SK-N-SH (cell line): ENCODE measurements at regions of chr12 and their contacts with region 1.

Region 1: GRCh38 chr12:12813120-12814101 is at the start of gene DDX47:
- DNase-seq: peak; percentile 92
- H3K4me3 ChIP-seq: peak within 1 kb of the TSS; percentile 96 to 99
- H3K27ac ChIP-seq: peak within 1 kb of the TSS; percentile 75 to 82
- H3K4me1 ChIP-seq: peaks cover 8 to 10% of the 10 kb centered on the region in 2 experiments
- H3K27me3 ChIP-seq: no peaks in the 10 kb centered on the region
- CTCF ChIP-seq: peak; percentile 82
- EP300 ChIP-seq: no peak
- RAD21 ChIP-seq: peak; percentile 61
- polyA plus RNA-seq, gene DDX47: 68.4 and 90.9 TPM in 2 replicates

Region 2: GRCh38 chr12:12786716-12787601 is 26.5 kb before region 1 on chr12:
- CTCF ChIA-PET with region 1: interaction called, 23 read pairs
- POLR2A ChIA-PET with region 1: interaction called, 8 read pairs
- DNase-seq: peak; percentile 97
- H3K4me3 ChIP-seq: peak overlapping the region; percentile 51 to 54
- H3K27ac ChIP-seq: peak overlapping the region; percentile 49 to 92; a peak in 3 of 4 replicates
- H3K4me1 ChIP-seq: peaks cover 5 to 30% of the 10 kb centered on the region in 2 experiments; a peak in 3 of 4 replicates
- H3K27me3 ChIP-seq: no peaks in the 10 kb centered on the region
- CTCF ChIP-seq: 0 out of 2 replicates have a peak, but pooled peaks have one; percentile 5
- EP300 ChIP-seq: peak in 1 of 2 experiments; percentile 22; a peak in 1 of 4 replicates
- RAD21 ChIP-seq: no peak

Region 3: GRCh38 chr12:12803186-12803585 is 10.2 kb before region 1 on chr12:
- CTCF ChIA-PET with region 1: interaction called, 18 read pairs
- POLR2A ChIA-PET with region 1: no interaction called
- DNase-seq: peak; percentile 27
- H3K4me3 ChIP-seq: no peak overlapping the region
- H3K27ac ChIP-seq: peak overlapping the region in 1 of 2 experiments; percentile 59; a peak in 2 of 4 replicates
- H3K4me1 ChIP-seq: peaks cover 4 to 26% of the 10 kb centered on the region in 2 experiments; a peak in 2 of 4 replicates
- H3K27me3 ChIP-seq: no peaks in the 10 kb centered on the region
- CTCF ChIP-seq: no peak
- EP300 ChIP-seq: peak in 1 of 2 experiments; percentile 34; a peak in 1 of 4 replicates
- RAD21 ChIP-seq: no peak

Region 4: DNA sequence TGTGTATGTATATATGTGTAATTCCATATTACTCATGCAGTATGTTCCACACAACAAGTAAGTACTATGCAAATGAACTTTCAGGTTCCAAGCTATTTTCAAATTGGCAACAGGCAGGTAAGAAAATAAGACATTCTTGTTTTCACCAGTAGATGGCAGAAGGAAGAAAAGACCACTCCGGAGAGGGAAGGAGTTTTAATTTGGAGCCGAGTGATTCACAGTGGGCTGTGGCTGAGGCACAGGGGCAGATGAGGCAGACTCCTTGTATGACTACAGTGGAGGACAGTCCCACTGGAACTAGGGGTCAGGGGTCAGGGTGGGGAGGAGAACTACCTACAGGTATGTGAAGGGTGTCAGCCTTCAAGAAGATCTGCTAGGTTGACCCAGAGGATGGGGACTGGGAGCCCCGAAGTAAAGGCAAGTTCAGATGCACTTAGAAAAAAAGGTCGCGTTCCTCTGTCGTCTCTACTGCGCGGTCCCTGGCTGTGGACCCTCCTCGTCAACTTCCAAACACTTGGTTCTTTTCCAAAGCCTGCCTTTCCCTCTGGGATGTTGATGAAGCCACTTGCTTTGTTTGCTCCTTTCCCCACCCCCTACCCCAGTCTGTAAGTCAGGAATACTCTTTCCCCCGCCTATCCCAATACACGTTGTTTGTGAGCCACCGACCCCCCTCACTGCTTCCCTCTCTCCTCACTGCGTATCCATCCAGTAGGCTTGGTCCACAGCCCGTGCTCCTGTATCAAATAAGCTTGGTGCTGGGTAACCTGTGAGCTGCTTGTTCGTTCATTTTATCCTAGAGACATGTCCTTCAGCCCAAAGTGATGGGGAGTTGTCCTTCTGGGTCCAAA is 23.8 kb after region 1 on chr12:
- CTCF ChIA-PET with region 1: interaction called, 18 read pairs
- POLR2A ChIA-PET with region 1: no interaction called
- DNase-seq: peak; percentile 66
- H3K4me3 ChIP-seq: no peak overlapping the region
- H3K27ac ChIP-seq: peak overlapping the region in 1 of 2 experiments; percentile 76; a peak in 1 of 4 replicates
- H3K4me1 ChIP-seq: peaks cover 0 to 39% of the 10 kb centered on the region in 2 experiments; a peak in 3 of 4 replicates
- H3K27me3 ChIP-seq: no peaks in the 10 kb centered on the region
- CTCF ChIP-seq: peak; percentile 74
- EP300 ChIP-seq: no peak
- RAD21 ChIP-seq: peak; percentile 60